ENCODE measurements at regions of chr2 and their contacts with region 1.

Region 1: GRCh38 chr2:73920577-73921545 is 5.8 kb upstream of the DGUOK start:
- DNase-seq: peak; percentile 38
- ATAC-seq: peak; percentile 77
- H3K4me3 ChIP-seq: no peak overlapping the region
- H3K27ac ChIP-seq: no peak overlapping the region
- H3K4me1 ChIP-seq: no peaks in the 10 kb centered on the region
- H3K27me3 ChIP-seq: no peaks in the 10 kb centered on the region
- CTCF ChIP-seq: peak; percentile 60
- POLR2A ChIP-seq: no peak
- RAD21 ChIP-seq: peak; percentile 61

Region 2: GRCh38 chr2:73877071-73877802 is 43.6 kb before region 1 on chr2:
- CTCF ChIA-PET with region 1: no interaction called
- POLR2A ChIA-PET with region 1: no interaction called
- dilution Hi-C with region 1: no loop called
- in situ Hi-C with region 1: no loop called
- intact Hi-C with region 1: no loop called
- DNase-seq: no peak
- ATAC-seq: no peak
- H3K4me3 ChIP-seq: no peak overlapping the region
- H3K27ac ChIP-seq: no peak overlapping the region
- H3K4me1 ChIP-seq: no peaks in the 10 kb centered on the region
- H3K27me3 ChIP-seq: no peaks in the 10 kb centered on the region
- CTCF ChIP-seq: no peak
- POLR2A ChIP-seq: no peak
- RAD21 ChIP-seq: no peak

Region 3: DNA sequence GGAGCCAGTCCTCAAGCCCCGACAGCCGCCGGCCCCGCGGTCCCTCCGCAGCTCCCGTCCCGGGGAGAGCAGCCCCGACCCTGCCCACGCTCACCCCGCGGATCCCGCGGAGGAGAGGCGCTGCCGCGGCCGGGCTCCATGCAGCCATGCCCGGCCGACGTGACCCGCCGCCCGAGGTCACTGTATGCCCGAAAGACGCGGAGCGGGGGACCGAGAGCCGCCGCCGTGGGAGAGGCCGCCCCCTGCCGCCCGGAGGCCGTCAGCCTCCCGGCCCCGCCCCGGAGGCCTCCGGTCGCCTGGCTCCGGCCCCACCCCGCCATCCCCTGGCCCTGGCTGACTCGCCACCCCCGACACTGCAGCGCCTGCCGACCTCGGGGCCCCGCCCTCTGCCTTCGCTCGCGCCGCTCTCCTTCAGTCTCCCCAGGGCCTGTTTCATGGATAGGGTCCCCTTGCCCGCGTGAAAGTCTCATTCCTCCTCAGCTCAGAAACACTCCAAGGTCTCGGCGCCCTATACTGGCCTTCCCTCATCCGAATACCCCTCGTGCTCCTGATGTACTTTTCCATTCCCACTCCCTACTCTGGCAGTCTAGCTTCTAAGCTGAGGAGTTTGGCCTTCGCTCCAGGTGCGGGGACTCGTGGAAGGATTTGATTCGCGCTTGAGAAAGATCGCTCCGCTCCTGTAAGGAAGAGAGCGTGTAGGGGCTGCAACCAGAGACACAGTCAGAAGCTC is 227.0 kb after region 1 on chr2 and contains the start of gene BOLA3:
- CTCF ChIA-PET with region 1: interaction called, 3 read pairs
- POLR2A ChIA-PET with region 1: no interaction called
- dilution Hi-C with region 1: no loop called
- in situ Hi-C with region 1: loop called (anchors 10 kb)
- intact Hi-C with region 1: loop called (anchors 1 kb)
- DNase-seq: peak; percentile 55
- ATAC-seq: peak; percentile 97
- H3K4me3 ChIP-seq: peak within 1 kb of the TSS; percentile 68
- H3K27ac ChIP-seq: peak within 1 kb of the TSS; percentile 54
- H3K4me1 ChIP-seq: peaks cover 11% of the 10 kb centered on the region
- H3K27me3 ChIP-seq: no peaks in the 10 kb centered on the region
- CTCF ChIP-seq: peak; percentile 69
- POLR2A ChIP-seq: peak; percentile 4
- RAD21 ChIP-seq: peak; percentile 58
- total RNA-seq, gene BOLA3: 13.3 and 36.4 TPM in 2 replicates